ENCODE measurements at regions of chr1 and their contacts with region 1.

Region 1: DNA sequence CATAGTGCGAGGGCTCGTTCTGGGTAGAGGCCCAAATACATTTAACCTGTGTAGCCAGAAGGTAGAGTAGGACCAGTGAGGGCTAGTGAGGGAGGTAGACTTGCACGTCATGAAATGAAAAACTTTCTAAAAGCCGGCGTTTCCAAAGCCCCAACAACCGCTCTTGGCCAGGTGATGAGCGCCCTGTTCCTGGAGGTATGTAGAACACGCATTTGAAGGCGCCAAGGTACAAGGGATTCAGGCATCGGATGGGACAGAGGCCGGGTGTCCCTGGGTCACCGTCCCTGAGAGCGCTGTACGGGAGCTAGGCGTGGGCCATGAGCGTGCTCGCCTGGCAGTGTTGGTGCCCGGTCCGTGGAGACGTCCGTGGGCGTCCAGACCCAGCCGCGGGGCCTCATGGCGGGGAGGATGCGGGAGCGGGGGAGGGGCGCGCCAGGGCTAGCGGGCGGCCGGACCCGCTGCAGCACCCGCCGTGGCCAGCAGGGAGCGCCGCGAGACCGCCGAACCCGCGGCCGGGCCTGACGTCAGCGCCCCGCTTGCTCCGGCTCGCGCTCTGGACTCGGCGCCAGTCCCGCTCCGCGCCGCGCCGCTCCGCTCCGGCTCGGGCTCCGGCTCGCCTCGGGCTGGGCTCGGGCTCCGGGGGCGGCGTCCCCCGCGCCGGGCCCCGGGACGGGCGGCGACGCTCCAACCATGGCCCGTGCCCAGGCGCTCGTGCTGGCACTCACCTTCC is at the start of gene PTPRU:
- DNase-seq: peak; percentile 78 to 92 (median 84)
- ATAC-seq: peak; percentile 54 to 89 (median 80)
- H3K4me3 ChIP-seq: peak within 1 kb of the TSS; percentile 48 to 83 (median 68)
- H3K27ac ChIP-seq: peak within 1 kb of the TSS in 11 of 12 donors; percentile 15 to 72 (median 46)
- H3K4me1 ChIP-seq: peaks cover 0 to 31% (median 15%) of the 10 kb centered on the region in 12 donors
- H3K27me3 ChIP-seq: peaks cover 0 to 30% (median 0%) of the 10 kb centered on the region in 9 donors
- CTCF ChIP-seq: peak; percentile 42 to 96 (median 85)
- POLR2A ChIP-seq: peak in 1 of 2 donors; percentile 22
- total RNA-seq, gene PTPRU: 7.1 to 59.9 (median 16.2) TPM

Region 2: GRCh38 chr1:29453502-29454240 is 217.6 kb after region 1 on chr1:
- intact Hi-C with region 1: loop called in 3 of 10 experiments (anchors 5 to 10 kb)
- DNase-seq: no peak
- ATAC-seq: peak in 1 of 4 donors; percentile 56
- H3K4me3 ChIP-seq: no peak overlapping the region
- H3K27ac ChIP-seq: no peak overlapping the region
- H3K4me1 ChIP-seq: no peaks in the 10 kb centered on the region
- H3K27me3 ChIP-seq: peaks cover 0 to 28% (median 0%) of the 10 kb centered on the region in 9 donors
- CTCF ChIP-seq: peak in 7 of 12 donors; percentile 7 to 38 (median 21)
- POLR2A ChIP-seq: no peak

Region 3: GRCh38 chr1:30085811-30086770 is 850.0 kb after region 1 on chr1:
- intact Hi-C with region 1: loop called in 3 of 10 experiments (anchors 2 to 10 kb)
- DNase-seq: peak in 4 of 5 donors; percentile 47 to 80 (median 56)
- ATAC-seq: peak in 3 of 4 donors; percentile 27 to 59 (median 47)
- H3K4me3 ChIP-seq: peak overlapping the region in 4 of 12 donors; percentile 5 to 39 (median 29)
- H3K27ac ChIP-seq: peak overlapping the region in 1 of 12 donors; percentile 4
- H3K4me1 ChIP-seq: peaks cover 4 to 42% (median 24%) of the 10 kb centered on the region in 12 donors
- H3K27me3 ChIP-seq: peaks cover 0 to 18% (median 0%) of the 10 kb centered on the region in 9 donors
- CTCF ChIP-seq: peak; percentile 31 to 76 (median 61)
- POLR2A ChIP-seq: no peak

Region 4: DNA sequence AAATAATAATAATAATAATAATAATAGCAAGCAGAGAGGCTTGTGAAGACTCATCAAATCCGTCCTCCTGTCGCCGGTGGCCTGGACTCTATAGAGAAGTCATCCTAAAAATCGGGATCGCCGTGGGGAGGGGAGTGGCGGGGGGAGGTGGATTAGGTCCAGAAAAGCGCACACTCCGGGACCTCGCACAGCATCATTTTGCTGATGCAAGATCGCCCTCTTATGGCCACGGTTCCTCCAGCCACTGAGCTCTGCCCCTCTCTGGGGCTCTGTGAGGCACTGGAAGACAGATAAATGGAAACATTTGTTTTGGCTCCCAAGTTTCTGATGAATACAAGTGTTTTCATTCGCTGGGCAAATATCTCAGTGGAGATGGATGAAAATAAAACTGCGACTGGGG is 875.3 kb after region 1 on chr1:
- intact Hi-C with region 1: loop called in 6 of 10 experiments (anchors 1 to 10 kb)
- DNase-seq: peak in 3 of 5 donors; percentile 35 to 43 (median 39)
- ATAC-seq: peak in 3 of 4 donors; percentile 75 to 78 (median 76)
- H3K4me3 ChIP-seq: no peak overlapping the region
- H3K27ac ChIP-seq: no peak overlapping the region
- H3K4me1 ChIP-seq: no peaks in the 10 kb centered on the region
- H3K27me3 ChIP-seq: peaks cover 0 to 67% (median 16%) of the 10 kb centered on the region in 9 donors
- CTCF ChIP-seq: peak; percentile 39 to 70 (median 58)
- POLR2A ChIP-seq: no peak

Region 5: DNA sequence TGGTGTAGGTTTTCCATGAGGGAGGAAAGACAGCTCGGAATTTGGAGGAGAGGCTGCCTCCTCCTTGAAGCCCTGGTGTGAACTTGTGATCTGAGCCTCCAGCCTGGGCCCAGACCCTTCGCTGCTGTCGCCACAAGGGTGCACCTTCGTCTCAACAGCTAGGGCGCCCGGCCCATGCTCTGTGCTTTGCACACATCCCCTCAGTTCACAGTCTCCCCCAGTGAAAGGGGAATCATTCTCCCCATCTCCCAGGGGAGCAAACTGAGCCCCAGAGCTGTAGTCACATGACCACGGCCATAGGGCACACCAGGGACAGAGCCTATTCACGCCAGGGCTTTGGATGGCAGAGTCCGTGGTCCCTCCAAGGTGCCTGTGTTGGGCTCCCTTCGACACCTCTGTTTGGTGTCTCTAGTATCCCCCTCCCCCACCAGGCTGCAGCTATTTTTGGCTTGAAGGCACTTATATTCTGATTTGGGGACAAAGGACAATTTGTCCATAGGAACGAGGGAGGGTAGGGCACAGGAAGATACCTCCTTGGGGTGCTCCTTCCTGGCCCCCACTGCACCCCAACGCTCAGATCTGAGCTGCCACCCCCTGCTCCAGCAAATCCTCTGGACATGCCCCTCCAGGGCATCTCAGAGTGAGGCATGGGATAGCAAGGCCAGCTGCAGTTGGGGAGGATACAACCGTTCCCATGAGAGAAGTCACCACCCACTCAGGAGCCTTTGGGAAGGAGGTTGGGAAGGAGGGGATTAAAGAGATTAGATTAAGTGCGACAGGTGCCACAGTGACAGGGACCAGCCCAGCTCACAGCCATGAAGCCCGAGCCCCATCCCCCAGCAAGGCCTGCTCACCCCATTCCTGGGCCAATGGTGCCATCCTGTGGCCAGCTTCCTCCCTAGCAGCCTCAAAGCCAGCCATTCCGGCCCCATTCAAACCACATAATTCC is 1471.6 kb after region 1 on chr1:
- intact Hi-C with region 1: loop called (anchors 2 to 5 kb)
- DNase-seq: peak; percentile 66 to 81 (median 76)
- ATAC-seq: peak; percentile 82 to 90 (median 87)
- H3K4me3 ChIP-seq: no peak overlapping the region
- H3K27ac ChIP-seq: no peak overlapping the region
- H3K4me1 ChIP-seq: peaks cover 0 to 26% (median 6%) of the 10 kb centered on the region in 12 donors
- H3K27me3 ChIP-seq: peaks cover 0 to 7% (median 0%) of the 10 kb centered on the region in 9 donors
- CTCF ChIP-seq: peak; percentile 46 to 85 (median 75)
- POLR2A ChIP-seq: no peak